Activated CD4-positive, alpha-beta T cell treated with anti-CD3 and anti-CD28 coated beads, Interleukin-2, amount 10 ng/mL, durations not matched to agents 24 days and 14 days (primary cell): ENCODE measurements at regions of chr20 and their contacts with region 1.

Region 1: DNA sequence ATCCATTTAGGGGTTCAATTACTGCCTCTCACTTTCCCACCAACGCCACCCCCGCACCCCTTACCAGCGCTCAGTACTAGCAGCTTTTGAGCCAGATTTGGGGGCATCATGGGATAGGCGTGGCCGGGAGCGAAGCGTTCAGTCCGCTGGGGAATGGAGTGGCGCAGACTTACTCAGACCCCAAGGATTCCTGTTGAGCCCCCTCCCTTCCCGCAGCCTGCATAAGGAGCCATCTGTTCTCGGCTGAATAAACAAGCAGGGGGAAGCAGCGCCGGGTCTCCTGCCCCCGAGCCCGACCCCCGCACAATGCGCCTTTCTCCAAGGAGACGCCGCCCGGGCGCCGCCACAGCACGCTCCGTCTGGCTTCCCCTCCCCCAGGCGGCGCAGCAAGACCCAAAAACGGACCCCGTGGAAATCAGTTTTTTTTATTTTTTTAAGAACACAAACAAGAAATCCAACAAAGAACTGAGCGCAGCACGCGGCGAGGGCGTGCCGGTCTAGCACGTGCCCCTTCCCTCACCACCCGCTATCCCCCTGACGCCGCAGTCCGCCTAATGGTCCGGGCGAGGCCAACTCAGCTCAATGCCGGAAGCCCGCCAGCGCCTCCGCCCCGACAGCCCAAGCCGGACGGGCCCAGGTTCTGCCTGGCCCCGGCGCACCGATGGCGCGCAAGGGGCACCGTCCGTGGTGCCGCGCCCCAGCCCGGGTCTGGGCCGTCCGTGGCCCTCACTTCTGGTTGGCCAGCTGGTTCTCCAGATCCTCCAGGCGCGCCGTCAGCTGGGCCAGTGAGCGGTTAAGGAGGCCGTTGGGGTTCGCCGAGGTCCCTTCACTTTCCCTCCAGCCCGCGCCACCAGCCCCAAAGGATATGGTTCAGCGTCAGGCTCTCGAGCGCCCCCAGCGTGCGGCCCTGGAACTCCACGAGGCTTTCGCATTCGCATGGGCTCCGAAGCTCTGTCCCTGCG is 13.3 kb upstream of the RBPJL start:
- DNase-seq: peak; percentile 96
- H3K4me3 Mint-ChIP-seq: peak overlapping the region; percentile 81
- H3K27ac Mint-ChIP-seq: no peak overlapping the region
- H3K4me1 Mint-ChIP-seq: peaks cover 13% of the 10 kb centered on the region
- H3K27me3 Mint-ChIP-seq: peaks cover 32% of the 10 kb centered on the region

Region 2: DNA sequence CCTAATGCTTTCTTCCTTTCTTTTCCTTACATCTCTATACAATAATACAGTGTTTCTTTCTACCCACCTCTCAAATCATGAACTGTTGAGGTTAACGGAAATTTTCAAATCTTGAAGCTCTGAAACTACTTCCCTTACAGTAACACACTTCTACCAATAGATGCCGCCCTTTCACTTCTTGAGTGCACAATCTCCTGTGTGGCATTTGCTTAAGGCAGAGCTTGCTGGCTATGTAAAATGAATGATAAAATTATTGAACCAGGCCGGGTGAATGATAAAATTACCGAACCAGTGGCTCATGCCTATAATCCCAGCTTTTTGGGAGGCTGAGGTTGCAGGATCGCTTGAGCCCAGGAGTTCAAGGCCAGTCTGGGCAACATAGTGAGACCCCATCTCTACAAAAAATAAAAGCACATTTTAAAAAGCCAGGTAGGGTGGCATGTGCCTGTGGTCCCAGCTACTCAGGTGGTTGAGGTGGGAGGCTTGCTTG is 249.2 kb before region 1 on chr20:
- intact Hi-C with region 1: loop called (anchors 2 kb)
- DNase-seq: peak; percentile 83
- H3K4me3 Mint-ChIP-seq: no peak overlapping the region
- H3K27ac Mint-ChIP-seq: peak overlapping the region; percentile 65
- H3K4me1 Mint-ChIP-seq: peaks cover 36% of the 10 kb centered on the region
- H3K27me3 Mint-ChIP-seq: no peaks in the 10 kb centered on the region

Region 3: DNA sequence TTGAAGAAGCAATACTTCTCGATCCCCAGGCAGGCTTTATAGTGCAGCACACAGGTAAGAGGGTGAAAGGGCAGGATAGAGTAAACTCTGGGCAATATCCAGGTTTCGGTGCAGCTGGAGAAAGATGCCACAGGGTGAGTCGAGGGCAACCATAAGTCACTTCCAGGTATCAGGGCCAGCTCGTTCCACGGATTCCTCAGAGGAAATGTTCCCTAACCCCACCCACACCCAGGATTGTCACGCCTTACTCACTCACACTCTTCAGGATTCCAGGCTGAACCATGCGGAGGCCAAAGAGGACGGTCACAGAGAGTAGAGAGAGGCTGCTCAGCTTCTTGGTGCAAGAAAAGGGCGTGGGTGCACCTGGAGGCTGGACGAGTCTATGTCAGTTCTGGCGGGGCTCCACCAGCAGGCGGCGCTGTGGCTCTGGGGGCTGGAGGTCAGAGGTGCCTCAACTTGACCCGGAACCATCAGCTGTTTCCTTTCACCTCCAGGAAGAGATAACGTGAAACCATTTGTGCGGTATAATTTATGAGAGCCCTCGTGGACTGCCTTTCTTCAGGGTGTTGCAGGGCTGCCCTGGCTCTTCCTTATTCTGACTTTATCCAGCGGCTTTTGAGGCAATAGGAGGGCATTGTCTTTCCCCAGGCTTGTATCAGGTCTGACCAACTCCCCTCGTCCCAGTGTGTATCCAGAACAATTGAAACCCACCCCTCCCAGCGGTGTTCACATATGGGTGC is 154.6 kb before region 1 on chr20:
- intact Hi-C with region 1: loop called (anchors 1 kb)
- DNase-seq: peak; percentile 89
- H3K4me3 Mint-ChIP-seq: no peak overlapping the region
- H3K27ac Mint-ChIP-seq: no peak overlapping the region
- H3K4me1 Mint-ChIP-seq: no peaks in the 10 kb centered on the region
- H3K27me3 Mint-ChIP-seq: peaks cover 12% of the 10 kb centered on the region